ENCODE measurements at regions of chr1 and their contacts with region 1.

Region 1: DNA sequence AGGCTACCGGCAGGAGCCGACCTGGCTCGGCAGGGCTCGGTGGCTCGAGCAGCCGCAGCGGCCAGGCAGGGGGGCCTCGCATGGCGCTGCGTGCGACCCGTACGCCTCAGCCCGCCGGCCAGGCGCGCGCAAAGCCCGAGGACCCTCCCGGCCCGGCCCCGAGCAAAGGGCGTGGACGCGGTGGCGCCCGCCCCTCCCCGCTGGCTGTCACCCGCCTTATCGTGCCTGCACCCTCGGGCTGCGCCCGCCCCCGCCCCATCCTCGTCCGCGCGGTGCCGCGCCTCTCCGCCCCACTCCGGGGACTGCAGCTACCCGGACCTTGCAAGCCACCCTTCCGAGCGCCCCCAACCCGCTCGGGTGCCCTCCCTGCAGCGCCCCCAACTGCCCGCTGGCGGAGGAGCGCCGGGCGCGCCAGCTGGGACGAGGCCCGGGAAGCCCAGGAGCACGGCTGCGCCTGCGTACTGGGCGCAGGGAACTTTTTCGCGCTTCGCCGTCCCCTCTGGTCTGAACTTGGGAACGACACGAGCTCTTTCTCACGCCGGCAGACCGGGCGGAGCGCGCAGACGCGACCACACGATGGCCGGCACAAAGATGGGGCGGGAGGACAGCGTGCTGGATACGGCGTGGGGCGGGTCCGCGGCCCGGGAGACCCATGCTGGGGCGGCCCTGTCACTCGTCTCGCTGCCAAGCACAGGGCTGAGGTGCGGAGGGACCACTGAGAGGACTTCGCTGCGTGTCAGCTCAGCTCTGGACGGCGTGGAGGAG is at the start of gene ABCB10:
- DNase-seq: peak; percentile 95
- ATAC-seq: peak; percentile 82
- H3K4me3 ChIP-seq: peak within 1 kb of the TSS; percentile 65 to 85 (median 69)
- H3K4me3 Mint-ChIP-seq: peak within 1 kb of the TSS; percentile 96
- H3K27ac ChIP-seq: peak within 1 kb of the TSS; percentile 43 to 68
- H3K27ac Mint-ChIP-seq: peak within 1 kb of the TSS; percentile 90
- H3K4me1 ChIP-seq: peaks cover 16 to 18% of the 10 kb centered on the region in 2 donors
- H3K4me1 Mint-ChIP-seq: peaks cover 32% of the 10 kb centered on the region
- H3K27me3 ChIP-seq: no peaks in the 10 kb centered on the region
- H3K27me3 Mint-ChIP-seq: no peaks in the 10 kb centered on the region
- CTCF ChIP-seq: peak; percentile 60
- total RNA-seq, gene ABCB10: 17.0 and 18.6 TPM in 2 replicates

Region 2: DNA sequence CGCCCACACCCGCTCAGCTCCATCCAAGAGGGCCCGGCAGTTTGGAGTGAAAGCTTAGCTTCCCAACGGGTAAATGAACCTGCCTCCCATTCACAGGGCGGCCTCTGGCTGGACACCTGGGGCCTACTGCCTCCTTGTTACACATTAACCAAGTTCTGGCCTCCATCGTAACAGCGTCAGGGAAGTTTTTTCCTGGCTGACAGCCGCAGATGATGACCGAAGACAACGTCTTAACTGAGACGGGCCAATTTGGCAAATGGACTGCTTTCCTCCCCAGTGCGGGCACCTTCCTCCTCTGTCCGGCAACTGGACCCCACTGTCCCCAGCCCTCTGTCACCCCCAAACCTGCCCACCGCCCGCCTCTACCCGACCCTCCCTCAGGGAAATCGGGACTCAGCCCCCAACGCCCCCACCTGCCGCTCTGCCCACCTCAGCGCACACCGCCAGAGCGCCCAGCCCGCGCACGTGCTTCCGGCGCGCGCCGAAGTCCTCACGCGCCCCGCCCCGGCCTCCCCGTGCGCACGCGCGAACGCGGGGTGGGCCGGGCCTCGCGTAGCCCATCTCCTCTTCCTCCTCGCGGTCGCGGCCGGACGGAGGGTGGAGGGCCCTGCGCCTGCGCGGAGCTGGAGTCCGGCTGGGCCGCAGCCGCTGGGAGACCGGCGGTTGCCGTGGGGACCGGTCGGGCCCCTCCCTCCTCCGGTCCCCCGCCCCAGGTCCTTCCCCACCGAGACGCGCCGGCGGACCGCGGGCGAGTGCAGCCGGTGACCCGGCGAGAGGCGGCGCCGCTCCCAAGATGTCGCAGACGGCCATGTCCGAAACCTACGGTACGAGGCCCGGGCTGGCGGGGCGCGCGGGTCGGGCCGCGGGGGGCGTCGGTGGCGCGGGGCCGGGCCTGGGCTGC is 288.0 kb before region 1 on chr1 and contains the start of gene RAB4A:
- CTCF ChIA-PET with region 1: no interaction called
- POLR2A ChIA-PET with region 1: no interaction called
- intact Hi-C with region 1: loop called (anchors 2 kb)
- DNase-seq: peak; percentile 90
- ATAC-seq: peak; percentile 90
- H3K4me3 ChIP-seq: peak within 1 kb of the TSS; percentile 59 to 89 (median 75)
- H3K4me3 Mint-ChIP-seq: peak within 1 kb of the TSS; percentile 96
- H3K27ac ChIP-seq: peak within 1 kb of the TSS; percentile 24 to 49
- H3K27ac Mint-ChIP-seq: peak within 1 kb of the TSS; percentile 85
- H3K4me1 ChIP-seq: peaks cover 16 to 22% of the 10 kb centered on the region in 2 donors
- H3K4me1 Mint-ChIP-seq: peaks cover 30% of the 10 kb centered on the region
- H3K27me3 ChIP-seq: no peaks in the 10 kb centered on the region
- H3K27me3 Mint-ChIP-seq: no peaks in the 10 kb centered on the region
- CTCF ChIP-seq: no peak
- total RNA-seq, gene RAB4A: 46.0 and 49.7 TPM in 2 replicates

Region 3: DNA sequence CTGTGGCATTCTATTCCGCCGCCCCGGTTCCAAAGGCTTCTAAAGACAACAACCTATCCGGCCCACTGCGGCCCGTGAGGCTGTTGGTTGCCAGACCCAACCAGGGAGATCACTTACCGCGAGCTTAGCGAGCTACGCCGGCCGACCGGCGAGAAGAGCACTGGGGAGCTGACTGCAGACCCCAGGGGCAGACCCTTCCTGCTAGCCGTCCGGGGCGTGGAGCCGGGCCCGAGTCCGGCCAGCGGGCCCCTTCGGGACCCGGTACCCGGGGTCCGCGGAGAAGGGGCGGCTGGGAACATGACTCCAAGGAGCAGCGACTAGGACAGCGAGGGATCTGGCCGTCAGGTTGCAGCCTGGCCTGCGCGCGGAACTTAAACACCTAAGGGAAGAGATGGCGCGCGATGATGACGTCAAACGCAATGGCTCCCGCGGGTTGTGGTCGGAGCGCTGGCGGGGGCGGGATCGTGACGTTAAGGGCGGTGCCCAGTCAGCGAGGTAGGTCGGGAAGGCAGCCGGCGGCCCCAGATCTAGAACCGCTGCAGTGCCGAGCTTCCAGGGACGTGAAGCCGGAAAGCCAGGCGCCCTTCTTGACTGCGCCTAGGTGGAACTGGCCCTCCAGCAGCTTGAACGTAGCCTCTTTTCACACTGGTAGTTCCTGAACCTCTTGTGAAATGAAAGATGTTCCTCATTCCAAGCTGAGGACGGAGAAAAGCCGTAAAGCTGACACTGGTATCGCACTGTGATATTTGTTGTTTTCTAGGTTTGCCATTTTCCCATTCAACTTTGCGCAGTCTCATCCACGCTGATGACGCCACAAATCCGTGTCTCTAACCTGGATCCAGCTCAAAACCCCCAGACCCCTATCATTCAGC is 50.6 kb before region 1 on chr1 and contains the start of gene NUP133:
- CTCF ChIA-PET with region 1: interaction called, 3 read pairs
- POLR2A ChIA-PET with region 1: no interaction called
- intact Hi-C with region 1: loop called (anchors 1 kb)
- DNase-seq: peak; percentile 99
- ATAC-seq: peak; percentile 95
- H3K4me3 ChIP-seq: peak within 1 kb of the TSS; percentile 87 to 99 (median 92)
- H3K4me3 Mint-ChIP-seq: peak within 1 kb of the TSS; percentile 96
- H3K27ac ChIP-seq: peak within 1 kb of the TSS; percentile 93 to 94
- H3K27ac Mint-ChIP-seq: peak within 1 kb of the TSS; percentile 99
- H3K4me1 ChIP-seq: peaks cover 14 to 17% of the 10 kb centered on the region in 2 donors
- H3K4me1 Mint-ChIP-seq: peaks cover 23% of the 10 kb centered on the region
- H3K27me3 ChIP-seq: no peaks in the 10 kb centered on the region
- H3K27me3 Mint-ChIP-seq: no peaks in the 10 kb centered on the region
- CTCF ChIP-seq: no peak
- total RNA-seq, gene NUP133: 49.7 and 50.5 TPM in 2 replicates

Region 4: DNA sequence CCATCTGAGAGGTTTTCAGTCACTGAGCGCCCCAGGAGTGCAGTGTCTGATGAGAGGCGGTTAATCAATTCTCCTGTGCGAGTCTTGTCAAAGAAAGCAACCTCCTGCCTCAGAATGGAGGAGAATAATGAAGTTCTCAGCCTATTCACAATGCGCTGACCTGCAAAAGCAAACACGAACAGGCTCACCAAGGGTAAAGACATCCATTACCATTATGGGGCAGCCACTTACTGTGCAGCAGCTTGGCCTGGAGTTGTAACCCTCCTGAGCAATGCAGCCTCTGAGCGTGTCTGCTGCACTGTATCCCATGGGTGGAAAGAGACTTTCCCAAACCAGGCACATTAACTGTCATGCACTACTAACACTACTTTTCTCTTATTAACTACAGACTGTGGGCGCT is 11.2 kb before region 1 on chr1:
- CTCF ChIA-PET with region 1: no interaction called
- POLR2A ChIA-PET with region 1: no interaction called
- intact Hi-C with region 1: no loop called
- DNase-seq: no peak
- ATAC-seq: no peak
- H3K4me3 ChIP-seq: no peak overlapping the region
- H3K4me3 Mint-ChIP-seq: no peak overlapping the region
- H3K27ac ChIP-seq: no peak overlapping the region
- H3K27ac Mint-ChIP-seq: no peak overlapping the region
- H3K4me1 ChIP-seq: peaks cover 0 to 2% of the 10 kb centered on the region in 2 donors
- H3K4me1 Mint-ChIP-seq: peaks cover 10% of the 10 kb centered on the region
- H3K27me3 ChIP-seq: no peaks in the 10 kb centered on the region
- H3K27me3 Mint-ChIP-seq: no peaks in the 10 kb centered on the region
- CTCF ChIP-seq: no peak

Region 5: GRCh38 chr1:229596925-229597699 is 38.4 kb after region 1 on chr1:
- CTCF ChIA-PET with region 1: no interaction called
- POLR2A ChIA-PET with region 1: no interaction called
- intact Hi-C with region 1: no loop called
- DNase-seq: no peak
- ATAC-seq: no peak
- H3K4me3 ChIP-seq: no peak overlapping the region
- H3K4me3 Mint-ChIP-seq: no peak overlapping the region
- H3K27ac ChIP-seq: no peak overlapping the region
- H3K27ac Mint-ChIP-seq: no peak overlapping the region
- H3K4me1 ChIP-seq: no peaks in the 10 kb centered on the region
- H3K4me1 Mint-ChIP-seq: no peaks in the 10 kb centered on the region
- H3K27me3 ChIP-seq: no peaks in the 10 kb centered on the region
- H3K27me3 Mint-ChIP-seq: no peaks in the 10 kb centered on the region
- CTCF ChIP-seq: no peak

Region 6: DNA sequence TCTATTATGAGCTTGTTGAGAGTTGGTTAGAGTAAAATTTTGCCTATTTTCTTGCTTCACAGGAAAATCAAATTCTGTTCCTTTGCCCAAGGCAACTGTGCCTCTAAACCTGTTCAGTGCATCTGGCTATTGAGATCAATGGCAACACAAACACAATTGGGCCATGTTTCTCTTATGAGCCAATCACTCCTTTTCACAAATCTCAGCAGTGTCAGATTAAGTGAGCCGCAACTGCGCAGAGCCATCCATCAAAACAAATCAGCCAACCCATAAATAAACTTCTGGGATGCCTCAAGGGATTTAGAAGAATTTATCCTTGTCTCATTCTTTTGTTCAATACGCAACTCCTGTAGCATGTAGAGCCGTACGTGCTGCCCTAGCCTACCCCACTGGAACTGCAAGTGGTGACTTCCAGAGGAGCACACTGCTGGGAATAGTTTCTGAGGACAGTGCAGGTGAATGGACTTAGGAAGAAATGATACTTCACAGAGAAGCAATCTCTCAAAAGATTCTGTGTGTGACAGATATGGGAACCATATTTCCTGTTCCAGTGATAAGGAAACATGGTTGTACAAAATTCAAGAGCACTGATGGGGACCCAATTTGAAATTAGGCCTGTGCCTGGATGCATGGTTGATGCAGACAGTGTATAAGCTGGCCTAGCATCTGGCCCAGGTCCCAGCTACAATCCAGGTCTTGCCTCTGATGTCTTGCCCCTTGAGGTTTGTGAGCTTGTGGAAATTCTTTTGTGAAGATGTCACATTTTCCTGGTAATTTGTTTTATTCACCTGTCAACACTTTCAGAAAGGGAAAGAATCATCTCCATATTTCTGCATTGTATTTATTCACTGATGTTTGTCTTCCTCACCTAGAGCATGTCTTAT is 233.5 kb after region 1 on chr1:
- CTCF ChIA-PET with region 1: no interaction called
- POLR2A ChIA-PET with region 1: no interaction called
- intact Hi-C with region 1: no loop called
- DNase-seq: no peak
- ATAC-seq: no peak
- H3K4me3 ChIP-seq: no peak overlapping the region
- H3K4me3 Mint-ChIP-seq: no peak overlapping the region
- H3K27ac ChIP-seq: no peak overlapping the region
- H3K27ac Mint-ChIP-seq: no peak overlapping the region
- H3K4me1 ChIP-seq: no peaks in the 10 kb centered on the region
- H3K4me1 Mint-ChIP-seq: no peaks in the 10 kb centered on the region
- H3K27me3 ChIP-seq: no peaks in the 10 kb centered on the region
- H3K27me3 Mint-ChIP-seq: peaks cover 11% of the 10 kb centered on the region
- CTCF ChIP-seq: no peak

Region 7: DNA sequence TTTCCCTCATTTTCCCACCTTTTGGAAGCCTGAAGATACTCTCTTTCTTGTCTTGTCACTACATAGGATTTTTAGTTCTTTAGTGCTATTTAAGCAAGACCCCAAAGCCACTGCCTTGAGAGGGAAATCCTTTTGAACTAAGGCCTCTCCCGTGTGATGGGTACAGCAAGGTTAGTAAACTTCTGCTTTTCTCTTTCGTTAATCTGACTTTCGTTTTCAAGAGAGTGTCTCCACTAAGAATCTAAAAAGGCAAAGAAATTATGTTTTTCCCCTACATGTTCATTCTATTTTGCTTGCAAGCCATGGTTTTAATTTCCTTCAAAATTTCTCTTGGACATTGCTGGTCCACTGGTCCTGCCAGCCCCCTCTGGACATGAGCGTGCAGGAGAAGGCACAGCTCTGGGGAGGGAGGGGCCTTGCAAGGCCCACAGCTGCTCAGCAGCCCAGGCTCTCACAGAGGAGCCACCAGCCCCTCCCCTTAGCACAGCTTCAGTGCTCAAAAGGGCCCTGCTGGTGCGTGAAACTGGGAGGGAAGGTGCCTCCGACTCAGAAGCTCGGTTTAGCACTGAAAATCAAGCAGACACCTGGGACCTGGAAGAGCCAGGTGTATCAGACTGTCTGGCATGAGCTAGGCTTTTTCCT is 297.4 kb after region 1 on chr1:
- CTCF ChIA-PET with region 1: no interaction called
- POLR2A ChIA-PET with region 1: no interaction called
- intact Hi-C with region 1: loop called (anchors 1 kb)
- DNase-seq: peak; percentile 82
- ATAC-seq: peak; percentile 99
- H3K4me3 ChIP-seq: peak overlapping the region; percentile 19 to 67 (median 46)
- H3K4me3 Mint-ChIP-seq: peak overlapping the region; percentile 96
- H3K27ac ChIP-seq: peak overlapping the region; percentile 85 to 90
- H3K27ac Mint-ChIP-seq: peak overlapping the region; percentile 97
- H3K4me1 ChIP-seq: peaks cover 34 to 35% of the 10 kb centered on the region in 2 donors
- H3K4me1 Mint-ChIP-seq: peaks cover 29% of the 10 kb centered on the region
- H3K27me3 ChIP-seq: no peaks in the 10 kb centered on the region
- H3K27me3 Mint-ChIP-seq: no peaks in the 10 kb centered on the region
- CTCF ChIP-seq: no peak

Region 8: DNA sequence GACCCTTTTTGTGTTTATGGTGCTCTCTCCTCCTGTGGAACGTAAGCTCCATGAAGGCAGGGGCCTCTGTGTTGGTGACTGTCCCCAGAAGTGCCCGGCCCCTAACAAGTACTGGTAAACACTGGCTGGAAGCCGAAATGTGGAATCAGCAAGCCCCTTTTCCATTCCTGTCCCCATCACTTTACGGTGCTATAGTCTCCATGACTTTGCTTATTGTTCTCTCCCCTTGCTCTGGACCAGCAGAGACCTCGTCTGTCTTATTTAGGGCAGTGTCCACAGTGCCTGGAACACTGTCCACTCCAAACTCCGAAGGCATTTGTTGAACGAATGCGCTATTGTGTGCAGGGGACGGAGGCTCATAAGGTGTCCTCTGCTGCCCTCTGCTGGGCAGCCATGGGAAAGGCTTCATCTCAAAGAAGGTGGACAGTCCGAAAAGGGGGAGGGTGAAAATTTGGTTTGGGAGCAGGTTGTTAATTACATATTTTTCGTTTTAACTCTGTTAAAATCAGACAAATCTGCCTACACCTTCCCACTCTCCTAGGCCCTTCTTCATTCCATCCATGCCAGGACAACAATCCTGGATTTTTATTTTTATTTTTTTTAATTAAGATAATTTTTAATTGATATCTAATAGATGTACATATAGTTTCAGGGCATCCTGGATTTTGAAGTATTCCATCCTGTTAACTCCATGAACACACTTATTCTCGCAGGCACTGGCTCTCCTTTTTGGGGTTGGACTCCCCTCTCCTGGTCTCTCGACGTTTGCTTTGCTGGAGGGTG is 751.8 kb after region 1 on chr1:
- CTCF ChIA-PET with region 1: interaction called, 3 read pairs
- POLR2A ChIA-PET with region 1: no interaction called
- intact Hi-C with region 1: loop called (anchors 1 kb)
- DNase-seq: peak; percentile 82
- ATAC-seq: peak; percentile 87
- H3K4me3 ChIP-seq: no peak overlapping the region
- H3K4me3 Mint-ChIP-seq: no peak overlapping the region
- H3K27ac ChIP-seq: no peak overlapping the region
- H3K27ac Mint-ChIP-seq: peak overlapping the region; percentile 8
- H3K4me1 ChIP-seq: peaks cover 3 to 6% of the 10 kb centered on the region in 2 donors
- H3K4me1 Mint-ChIP-seq: peaks cover 19% of the 10 kb centered on the region
- H3K27me3 ChIP-seq: no peaks in the 10 kb centered on the region
- H3K27me3 Mint-ChIP-seq: peaks cover 8% of the 10 kb centered on the region
- CTCF ChIP-seq: peak; percentile 97